Left colon (tissue), 2 donors: ENCODE measurements at regions of chr7 and their contacts with region 1.

Region 1: GRCh38 chr7:87506246-87507180 is 31.0 kb upstream of the ABCB4 start:
- DNase-seq: no peak
- ATAC-seq: peak; percentile 43

Region 2: GRCh38 chr7:87398446-87398845 is 108.1 kb before region 1 on chr7:
- intact Hi-C with region 1: no loop called
- DNase-seq: no peak
- ATAC-seq: no peak

Region 3: GRCh38 chr7:87624628-87625027 is 118.1 kb after region 1 on chr7:
- intact Hi-C with region 1: no loop called
- DNase-seq: no peak
- ATAC-seq: no peak

Region 4: GRCh38 chr7:87886875-87887274 is 380.4 kb after region 1 on chr7:
- intact Hi-C with region 1: loop called in 1 of 2 experiments (anchors 10 kb)
- DNase-seq: no peak
- ATAC-seq: peak; percentile 34